ENCODE measurements at regions of chr6 and their contacts with region 1.

Region 1: GRCh38 chr6:153032255-153032882 is 29.9 kb upstream of the MTRF1L start:
- DNase-seq: peak in 3 of 4 experiments; percentile 17 to 30 (median 17)
- ATAC-seq: peak; percentile 58; the same call in 2 of the 3 replicates
- H3K4me3 ChIP-seq: no peak overlapping the region
- H3K27ac ChIP-seq: no peak overlapping the region
- H3K4me1 ChIP-seq: no peaks in the 10 kb centered on the region
- H3K27me3 ChIP-seq: no peaks in the 10 kb centered on the region; a peak in 1 of 5 replicates
- CTCF ChIP-seq: peak in 2 of 3 experiments; percentile 14 to 53; a peak in 3 of 6 replicates
- EP300 ChIP-seq: no peak
- POLR2A ChIP-seq: no peak
- RAD21 ChIP-seq: peak; percentile 45 to 53

Region 2: DNA sequence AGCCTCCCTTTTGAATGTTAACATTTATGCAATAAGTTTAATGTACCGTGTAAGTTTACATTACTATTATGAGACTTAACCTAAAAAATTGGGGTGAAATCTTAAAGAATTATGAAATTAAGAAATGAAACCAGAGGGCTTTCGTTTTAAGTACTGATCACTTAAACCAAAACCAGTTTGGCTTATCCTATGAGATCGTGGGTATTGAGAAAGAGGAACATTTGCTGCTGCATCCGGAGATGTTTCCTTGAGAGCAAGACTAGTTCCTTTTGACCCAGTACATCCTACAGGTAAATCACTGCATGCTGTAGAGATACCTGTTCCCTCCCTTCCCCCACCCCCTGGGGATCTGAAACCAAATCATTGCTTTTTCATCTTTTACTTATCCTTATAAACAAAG is 1023.6 kb before region 1 on chr6:
- CTCF ChIA-PET with region 1: no interaction called
- POLR2A ChIA-PET with region 1: no interaction called
- in situ Hi-C with region 1: no loop called
- intact Hi-C with region 1: no loop called
- DNase-seq: no peak
- ATAC-seq: no peak
- H3K4me3 ChIP-seq: no peak overlapping the region
- H3K27ac ChIP-seq: no peak overlapping the region
- H3K4me1 ChIP-seq: no peaks in the 10 kb centered on the region
- H3K27me3 ChIP-seq: no peaks in the 10 kb centered on the region
- CTCF ChIP-seq: no peak
- EP300 ChIP-seq: no peak
- POLR2A ChIP-seq: no peak
- RAD21 ChIP-seq: no peak

Region 3: DNA sequence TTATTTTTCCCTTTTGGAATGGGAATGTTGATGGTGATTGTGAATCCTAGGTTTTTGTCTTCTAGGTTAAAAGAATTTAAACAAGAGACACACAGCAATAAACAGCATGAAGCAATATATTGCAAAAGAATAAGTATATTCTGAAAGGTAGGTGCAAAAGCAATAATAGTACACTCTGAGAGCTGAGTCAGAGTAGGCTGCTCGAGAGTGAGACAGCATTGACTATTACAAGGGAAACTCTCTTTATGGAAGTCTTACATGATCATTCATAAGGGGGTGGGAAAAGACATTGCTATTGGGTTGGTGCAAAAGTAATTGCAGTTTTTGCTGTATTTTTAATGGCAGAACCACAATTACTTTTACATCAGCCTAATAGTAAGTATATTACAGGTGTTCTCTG is 74.6 kb before region 1 on chr6:
- CTCF ChIA-PET with region 1: no interaction called
- POLR2A ChIA-PET with region 1: no interaction called
- in situ Hi-C with region 1: no loop called
- intact Hi-C with region 1: no loop called
- DNase-seq: no peak
- ATAC-seq: no peak
- H3K4me3 ChIP-seq: no peak overlapping the region
- H3K27ac ChIP-seq: no peak overlapping the region
- H3K4me1 ChIP-seq: no peaks in the 10 kb centered on the region
- H3K27me3 ChIP-seq: peaks cover 6 to 20% of the 10 kb centered on the region in 2 experiments
- CTCF ChIP-seq: no peak
- EP300 ChIP-seq: no peak
- POLR2A ChIP-seq: no peak
- RAD21 ChIP-seq: no peak

Region 4: GRCh38 chr6:153511896-153512496 is 479.6 kb after region 1 on chr6:
- CTCF ChIA-PET with region 1: no interaction called
- POLR2A ChIA-PET with region 1: no interaction called
- in situ Hi-C with region 1: no loop called
- intact Hi-C with region 1: loop called (anchors 5 kb)
- DNase-seq: peak; percentile 19 to 39 (median 30)
- ATAC-seq: peak; percentile 68
- H3K4me3 ChIP-seq: no peak overlapping the region
- H3K27ac ChIP-seq: no peak overlapping the region
- H3K4me1 ChIP-seq: no peaks in the 10 kb centered on the region
- H3K27me3 ChIP-seq: no peaks in the 10 kb centered on the region
- CTCF ChIP-seq: peak in 2 of 3 experiments; percentile 38 to 39; a peak in 3 of 6 replicates
- EP300 ChIP-seq: no peak
- POLR2A ChIP-seq: no peak
- RAD21 ChIP-seq: peak in 1 of 2 experiments; percentile 42; a peak in 2 of 4 replicates

Region 5: GRCh38 chr6:154276810-154277628 is 1244.7 kb after region 1 on chr6:
- CTCF ChIA-PET with region 1: no interaction called
- POLR2A ChIA-PET with region 1: no interaction called
- in situ Hi-C with region 1: no loop called
- intact Hi-C with region 1: loop called (anchors 5 kb)
- DNase-seq: peak; percentile 20 to 38 (median 25)
- ATAC-seq: peak; percentile 78
- H3K4me3 ChIP-seq: no peak overlapping the region
- H3K27ac ChIP-seq: no peak overlapping the region
- H3K4me1 ChIP-seq: no peaks in the 10 kb centered on the region
- H3K27me3 ChIP-seq: no peaks in the 10 kb centered on the region
- CTCF ChIP-seq: peak; percentile 38 to 68 (median 44); a peak in 4 of 6 replicates
- EP300 ChIP-seq: no peak
- POLR2A ChIP-seq: no peak
- RAD21 ChIP-seq: peak; percentile 42 to 58